ENCODE measurements at regions of chr3 and their contacts with region 1.

Region 1: GRCh38 chr3:50121416-50122032 is 32.8 kb downstream of the RBM5 start:
- DNase-seq: no peak
- H3K4me3 ChIP-seq: no peak overlapping the region
- H3K27ac ChIP-seq: no peak overlapping the region
- H3K4me1 ChIP-seq: peaks cover 43% of the 10 kb centered on the region
- H3K27me3 ChIP-seq: no peaks in the 10 kb centered on the region
- CTCF ChIP-seq: peak; percentile 70 to 89 (median 81)
- POLR2A ChIP-seq: no peak

Region 2: DNA sequence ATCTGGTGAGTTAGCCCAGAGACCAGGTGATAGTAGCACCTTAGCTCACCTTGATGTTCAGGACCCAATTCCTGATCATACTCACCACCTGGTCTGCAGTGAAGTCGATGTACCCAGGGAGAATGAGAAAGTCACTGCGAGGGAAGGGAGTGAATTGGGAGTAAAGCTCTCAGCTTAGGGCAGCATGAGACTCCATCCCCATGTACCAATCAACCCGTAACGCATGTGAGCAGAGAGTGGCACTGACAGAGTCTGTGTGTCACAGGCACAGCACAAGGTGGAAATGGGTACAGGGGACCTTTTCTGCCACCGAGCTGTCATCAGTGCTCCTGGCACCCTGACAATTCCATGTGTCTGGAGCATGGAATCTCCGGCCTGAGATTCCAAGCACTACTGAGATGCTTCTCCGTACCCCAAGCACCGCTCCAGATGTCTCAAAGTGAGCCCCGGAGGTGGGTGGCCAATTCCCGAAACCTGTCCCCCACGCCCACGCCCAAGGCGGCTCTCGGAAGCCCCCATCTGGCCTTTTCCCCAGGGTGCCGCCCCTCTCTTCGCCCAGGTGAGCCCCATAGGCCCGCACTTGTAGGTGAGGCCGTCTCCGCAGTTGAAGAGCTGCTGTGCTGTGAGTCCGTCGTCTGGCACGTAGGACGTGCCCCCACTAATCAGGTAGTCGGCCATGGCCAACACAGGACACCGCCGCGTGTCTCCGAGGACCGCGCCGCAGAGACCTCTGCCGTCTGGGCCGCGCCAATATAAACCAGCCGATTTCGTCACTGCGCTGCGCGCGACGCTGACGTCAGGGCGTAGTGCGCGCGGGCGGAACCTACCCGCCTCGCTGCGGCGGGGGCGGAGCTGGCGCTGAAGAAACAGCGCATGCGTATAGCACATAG is 1092.6 kb before region 1 on chr3 and contains the start of gene IMPDH2:
- intact Hi-C with region 1: no loop called
- DNase-seq: peak in 1 of 2 donors; percentile 93
- H3K4me3 ChIP-seq: peak within 1 kb of the TSS; percentile 75 to 86
- H3K27ac ChIP-seq: peak within 1 kb of the TSS; percentile 96
- H3K4me1 ChIP-seq: peaks cover 15% of the 10 kb centered on the region
- H3K27me3 ChIP-seq: no peaks in the 10 kb centered on the region
- CTCF ChIP-seq: no peak
- POLR2A ChIP-seq: peak in 1 of 2 donors; percentile 90
- total RNA-seq, gene IMPDH2: 185 TPM

Region 3: DNA sequence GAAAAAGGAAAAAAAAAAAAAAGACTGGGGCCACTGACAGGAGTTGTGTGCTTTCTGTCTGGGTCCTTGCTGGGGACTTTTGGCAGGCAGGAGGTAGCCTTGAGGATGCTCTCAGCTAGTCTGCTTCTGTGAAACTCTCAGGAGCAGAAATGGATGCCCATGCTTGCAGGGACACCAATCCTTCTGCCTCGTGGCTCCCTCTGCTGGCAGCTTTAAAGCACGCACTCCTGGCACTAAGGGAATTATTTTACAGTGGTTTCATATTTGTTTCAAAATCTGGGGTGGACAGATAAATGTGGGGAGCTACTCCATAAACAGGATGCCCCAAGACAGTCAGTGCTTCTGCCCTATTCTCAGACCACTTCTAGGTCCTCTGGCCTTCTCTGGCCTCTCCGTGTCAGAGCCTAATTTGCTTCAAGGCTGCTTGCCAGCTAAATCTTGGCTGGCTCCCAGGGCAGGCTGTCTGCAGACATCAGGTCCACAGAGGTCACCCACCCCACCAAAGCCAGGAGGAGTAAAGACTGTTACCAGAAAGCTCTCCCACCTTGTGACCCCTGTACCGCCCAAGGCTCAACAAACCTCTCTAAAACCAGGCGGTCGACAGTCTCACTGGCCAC is 282.2 kb before region 1 on chr3:
- intact Hi-C with region 1: no loop called
- DNase-seq: no peak
- H3K4me3 ChIP-seq: no peak overlapping the region
- H3K27ac ChIP-seq: peak overlapping the region; percentile 47
- H3K4me1 ChIP-seq: peaks cover 6% of the 10 kb centered on the region
- H3K27me3 ChIP-seq: no peaks in the 10 kb centered on the region
- CTCF ChIP-seq: peak; percentile 78 to 93 (median 80)
- POLR2A ChIP-seq: no peak

Region 4: GRCh38 chr3:50272911-50273693 is 151.6 kb after region 1 on chr3:
- intact Hi-C with region 1: loop called (anchors 10 kb)
- DNase-seq: no peak
- H3K4me3 ChIP-seq: peak overlapping the region; percentile 23 to 28
- H3K27ac ChIP-seq: peak overlapping the region; percentile 37
- H3K4me1 ChIP-seq: peaks cover 66% of the 10 kb centered on the region
- H3K27me3 ChIP-seq: no peaks in the 10 kb centered on the region
- CTCF ChIP-seq: peak; percentile 91 to 100 (median 99)
- POLR2A ChIP-seq: no peak

Region 5: DNA sequence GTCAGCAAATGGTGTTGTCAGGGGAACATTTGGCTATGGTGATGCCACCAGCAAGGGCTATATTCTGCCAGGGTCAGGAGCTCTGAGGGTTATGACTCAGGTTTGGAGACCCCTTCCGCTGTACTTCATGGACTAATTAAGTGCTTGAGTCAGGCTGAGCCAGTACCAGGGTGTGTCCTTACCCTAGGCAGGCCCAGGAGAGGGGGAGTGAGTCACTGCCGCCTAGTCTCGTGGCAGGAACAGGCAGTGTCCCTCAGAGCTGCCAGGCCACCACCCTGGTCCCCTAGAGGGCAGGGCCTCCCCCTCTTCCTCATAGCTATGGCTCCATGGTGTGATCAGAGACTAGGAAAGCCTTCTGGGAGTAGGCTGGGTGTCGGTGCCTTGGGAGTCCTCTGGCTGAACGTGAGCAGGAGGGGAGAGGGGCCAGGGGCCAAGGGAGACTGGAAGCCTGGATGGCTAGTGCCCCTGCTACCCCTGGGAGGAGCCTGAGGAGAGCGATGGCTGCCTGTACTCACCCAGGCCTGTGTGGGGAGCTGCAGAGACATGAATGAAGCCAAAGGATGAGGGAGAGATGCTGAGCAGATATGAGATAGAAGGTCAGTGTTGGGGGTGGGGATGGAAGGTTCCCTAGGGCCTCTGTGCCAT is 506.0 kb after region 1 on chr3:
- intact Hi-C with region 1: no loop called
- DNase-seq: no peak
- H3K4me3 ChIP-seq: no peak overlapping the region
- H3K27ac ChIP-seq: peak overlapping the region; percentile 46
- H3K4me1 ChIP-seq: peaks cover 76% of the 10 kb centered on the region
- H3K27me3 ChIP-seq: no peaks in the 10 kb centered on the region
- CTCF ChIP-seq: no peak
- POLR2A ChIP-seq: no peak

Measured in vagina (tissue), 2 donors.